Gastrocnemius medialis (tissue), 4 donors: ENCODE measurements at regions of chr20 and their contacts with region 1.

Region 1: GRCh38 chr20:50575847-50576720 is 65.9 kb downstream of the PTPN1 start:
- DNase-seq: peak; percentile 56 to 81
- ATAC-seq: peak; percentile 20 to 32
- H3K4me3 ChIP-seq: no peak overlapping the region
- H3K27ac ChIP-seq: peak overlapping the region; percentile 89 to 96 (median 92)
- H3K4me1 ChIP-seq: peaks cover 66 to 68% of the 10 kb centered on the region in 2 donors
- H3K27me3 ChIP-seq: no peaks in the 10 kb centered on the region
- CTCF ChIP-seq: peak; percentile 54 to 84 (median 78)
- POLR2A ChIP-seq: no peak

Region 2: GRCh38 chr20:50115591-50116372 is 460.3 kb before region 1 on chr20:
- in situ Hi-C with region 1: no loop called
- intact Hi-C with region 1: loop called (anchors 5 kb)
- DNase-seq: peak; percentile 97
- ATAC-seq: peak; percentile 85 to 87
- H3K4me3 ChIP-seq: peak overlapping the region; percentile 55 to 63 (median 59)
- H3K27ac ChIP-seq: peak overlapping the region; percentile 80 to 98 (median 88)
- H3K4me1 ChIP-seq: peaks cover 37 to 40% of the 10 kb centered on the region in 2 donors
- H3K27me3 ChIP-seq: no peaks in the 10 kb centered on the region
- CTCF ChIP-seq: no peak
- POLR2A ChIP-seq: peak; percentile 45 to 51

Region 3: DNA sequence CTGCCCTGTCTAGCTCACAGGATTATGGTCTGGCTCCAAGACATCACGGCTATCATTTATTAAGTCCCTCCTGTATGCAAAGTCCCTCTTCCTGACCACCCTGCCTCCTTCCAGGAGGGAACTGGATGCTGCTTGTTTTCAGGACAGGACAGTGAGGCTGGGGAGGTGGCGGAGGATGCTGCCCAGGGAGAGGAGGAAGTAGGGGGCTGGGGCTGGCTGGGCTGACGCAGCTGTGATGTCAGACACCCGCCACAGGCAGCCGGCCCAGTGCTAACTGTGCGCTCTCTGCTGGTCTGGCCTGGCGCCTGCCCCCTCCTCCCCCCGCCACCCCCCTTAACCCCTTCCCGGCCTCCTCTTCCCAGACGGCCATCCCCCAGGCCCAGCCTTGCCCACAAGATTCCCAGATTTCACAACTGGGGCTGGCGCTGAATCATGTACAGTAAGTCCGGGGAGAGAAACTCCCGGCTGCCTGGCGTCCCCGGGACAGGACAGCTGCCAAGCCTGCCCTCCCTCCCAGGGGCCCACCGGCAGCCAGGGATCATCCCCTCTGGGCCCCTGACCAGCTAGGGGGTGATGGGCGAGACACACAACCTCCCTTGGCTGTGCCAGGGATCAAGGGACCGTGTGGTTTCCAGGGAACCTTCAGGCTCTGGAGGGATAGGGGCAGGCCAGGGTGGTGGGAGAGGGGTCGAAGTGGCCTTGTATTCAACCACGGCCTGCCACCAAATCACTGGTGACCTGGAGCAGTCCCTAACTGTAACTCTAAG is 267.4 kb before region 1 on chr20:
- in situ Hi-C with region 1: no loop called
- intact Hi-C with region 1: loop called (anchors 10 kb)
- DNase-seq: peak; percentile 79 to 87
- ATAC-seq: peak; percentile 19 to 27
- H3K4me3 ChIP-seq: no peak overlapping the region
- H3K27ac ChIP-seq: peak overlapping the region; percentile 87 to 95 (median 90)
- H3K4me1 ChIP-seq: peaks cover 49 to 53% of the 10 kb centered on the region in 2 donors
- H3K27me3 ChIP-seq: no peaks in the 10 kb centered on the region
- CTCF ChIP-seq: no peak
- POLR2A ChIP-seq: peak; percentile 53 to 67

Region 4: DNA sequence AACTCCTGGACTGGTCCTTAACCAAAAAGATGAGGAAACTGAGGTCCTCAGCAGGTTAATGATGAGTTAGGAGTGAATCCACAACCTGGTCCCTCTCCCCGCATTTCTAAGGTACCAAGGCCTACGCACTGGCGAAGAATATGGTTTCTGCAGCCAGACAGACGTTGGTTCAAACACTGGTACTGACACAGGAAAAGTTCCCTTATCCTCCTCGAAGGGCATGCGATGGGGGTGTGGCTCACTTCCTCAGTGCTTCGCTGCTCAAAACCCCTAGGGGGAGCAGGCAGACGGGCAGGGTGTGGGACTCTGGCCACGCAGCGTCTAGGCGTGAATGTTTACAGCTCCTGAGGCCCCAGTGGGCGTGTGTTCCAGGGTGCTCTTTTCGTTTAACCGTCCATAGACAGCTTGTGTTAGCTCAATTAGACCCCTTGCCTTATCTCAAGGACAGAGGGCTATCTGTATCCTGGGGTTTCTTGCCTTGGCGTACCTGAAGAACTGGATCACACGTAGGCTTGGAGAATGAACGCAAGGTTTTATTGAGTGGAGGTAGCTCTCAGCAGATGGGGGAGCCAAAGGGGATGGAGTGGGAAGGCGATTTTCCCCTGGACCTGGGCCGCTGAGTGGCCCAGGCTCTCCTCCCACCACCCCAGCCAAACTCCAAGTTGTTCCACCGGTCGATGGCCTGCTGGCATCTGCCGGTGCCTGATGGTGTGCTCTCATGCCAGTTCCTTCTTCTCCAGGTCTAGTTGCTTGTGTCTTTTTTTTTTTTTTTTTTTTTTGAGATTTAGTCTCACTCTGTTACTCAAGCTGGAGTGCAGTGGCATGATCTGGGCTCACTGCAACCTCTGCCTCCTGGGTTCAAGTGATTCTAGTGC is 97.7 kb before region 1 on chr20:
- in situ Hi-C with region 1: loop called in 2 of 4 experiments (anchors 5 to 10 kb)
- intact Hi-C with region 1: loop called (anchors 2 kb)
- DNase-seq: peak; percentile 32 to 56
- ATAC-seq: peak in 1 of 2 donors; percentile 38
- H3K4me3 ChIP-seq: no peak overlapping the region
- H3K27ac ChIP-seq: no peak overlapping the region
- H3K4me1 ChIP-seq: peaks cover 5 to 6% of the 10 kb centered on the region in 2 donors
- H3K27me3 ChIP-seq: no peaks in the 10 kb centered on the region
- CTCF ChIP-seq: peak; percentile 32 to 49 (median 45)
- POLR2A ChIP-seq: no peak

Region 5: DNA sequence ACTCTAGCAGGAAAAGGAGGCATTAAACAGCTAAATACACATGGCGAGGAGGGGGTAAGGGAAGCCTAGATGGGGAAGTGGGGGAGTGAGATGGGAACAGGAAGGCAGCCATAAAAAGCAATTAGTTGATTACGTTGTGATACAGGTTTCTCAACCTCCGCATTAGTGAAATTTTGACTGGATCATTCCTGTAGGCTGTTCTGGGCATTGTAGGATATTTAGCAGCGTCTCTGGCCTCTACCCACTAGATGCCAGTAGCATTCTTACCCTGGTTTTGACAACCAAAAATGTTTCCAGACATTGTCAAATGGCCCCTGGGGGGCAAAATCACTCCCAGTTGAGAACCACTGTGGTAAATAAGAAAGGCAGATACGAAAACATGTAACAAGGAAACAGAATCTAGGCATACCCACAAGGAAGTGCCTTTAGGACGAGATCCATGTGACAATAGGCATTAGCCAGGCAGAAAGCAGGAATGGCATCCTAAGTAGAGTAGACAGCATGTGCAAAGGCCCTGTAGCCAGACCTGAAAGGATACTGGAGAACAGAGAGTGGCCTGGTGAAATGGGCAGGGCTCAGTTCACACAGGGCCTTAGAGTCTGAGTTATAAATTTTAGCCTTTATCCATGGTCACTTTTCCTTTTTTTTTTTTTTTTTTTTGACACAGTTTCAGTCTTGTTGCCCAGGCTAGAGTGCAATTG is 91.7 kb before region 1 on chr20:
- in situ Hi-C with region 1: loop called in 2 of 4 experiments (anchors 5 to 10 kb)
- intact Hi-C with region 1: loop called (anchors 2 kb)
- DNase-seq: no peak
- ATAC-seq: no peak
- H3K4me3 ChIP-seq: peak overlapping the region in 2 of 4 donors; percentile 54 to 57
- H3K27ac ChIP-seq: peak overlapping the region; percentile 62 to 78 (median 72)
- H3K4me1 ChIP-seq: peaks cover 4 to 7% of the 10 kb centered on the region in 2 donors
- H3K27me3 ChIP-seq: no peaks in the 10 kb centered on the region
- CTCF ChIP-seq: no peak
- POLR2A ChIP-seq: no peak

Region 6: DNA sequence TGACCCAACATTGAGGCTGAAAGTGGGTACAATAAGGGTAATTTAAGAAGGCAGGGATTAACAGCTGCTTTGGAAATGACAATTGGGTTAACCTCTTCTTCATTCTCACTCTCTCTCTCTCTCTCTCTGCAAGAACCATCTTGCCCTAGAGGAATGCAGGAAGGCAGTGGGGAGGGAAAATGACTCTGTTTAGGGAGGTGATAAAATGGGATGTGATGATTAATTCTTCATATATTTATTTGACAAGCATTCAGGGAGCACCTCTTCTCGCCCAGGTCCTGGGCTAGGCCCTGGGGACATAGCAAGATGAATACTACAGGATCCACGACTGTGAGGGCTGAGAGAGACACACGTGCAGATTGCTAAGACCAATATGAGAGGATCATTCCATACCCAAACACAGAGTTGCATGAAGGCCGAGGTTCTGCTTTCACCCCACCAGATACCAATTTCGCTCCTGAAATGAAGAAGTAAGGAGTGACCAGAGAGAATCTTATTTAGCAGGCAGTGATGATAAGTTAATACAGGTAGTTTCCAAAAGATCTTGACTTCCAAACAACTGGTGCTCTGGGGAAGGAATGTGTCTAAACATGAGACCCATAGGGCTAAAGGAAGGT is 79.2 kb before region 1 on chr20:
- in situ Hi-C with region 1: no loop called
- intact Hi-C with region 1: no loop called
- DNase-seq: no peak
- ATAC-seq: no peak
- H3K4me3 ChIP-seq: no peak overlapping the region
- H3K27ac ChIP-seq: no peak overlapping the region
- H3K4me1 ChIP-seq: no peaks in the 10 kb centered on the region
- H3K27me3 ChIP-seq: no peaks in the 10 kb centered on the region
- CTCF ChIP-seq: no peak
- POLR2A ChIP-seq: no peak

Region 7: GRCh38 chr20:50509935-50510705 is 66.0 kb before region 1 on chr20 and contains the start of gene PTPN1:
- in situ Hi-C with region 1: loop called in 2 of 4 experiments (anchors 5 kb)
- intact Hi-C with region 1: loop called (anchors 1 kb)
- DNase-seq: peak; percentile 98
- ATAC-seq: peak; percentile 90 to 97
- H3K4me3 ChIP-seq: peak within 1 kb of the TSS; percentile 90 to 100 (median 94)
- H3K27ac ChIP-seq: peak within 1 kb of the TSS; percentile 92 to 99 (median 96)
- H3K4me1 ChIP-seq: peaks cover 42 to 44% of the 10 kb centered on the region in 2 donors
- H3K27me3 ChIP-seq: no peaks in the 10 kb centered on the region
- CTCF ChIP-seq: peak in 2 of 5 experiments; percentile 11 to 25
- POLR2A ChIP-seq: peak; percentile 99
- total RNA-seq, gene PTPN1: 21.8 to 46.8 (median 44.4) TPM